Caco-2 (cell line): ENCODE measurements at regions of chr17 and their contacts with region 1.

Region 1: GRCh38 chr17:43760254-43760852 is 1.8 kb upstream of the SOST start:
- DNase-seq: peak; percentile 96
- H3K4me3 ChIP-seq: no peak overlapping the region
- H3K4me3 Mint-ChIP-seq: peak overlapping the region; percentile 46
- H3K27ac Mint-ChIP-seq: peak overlapping the region; percentile 44
- H3K4me1 ChIP-seq: no peaks in the 10 kb centered on the region
- H3K4me1 Mint-ChIP-seq: peaks cover 9% of the 10 kb centered on the region
- H3K27me3 ChIP-seq: no peaks in the 10 kb centered on the region
- H3K27me3 Mint-ChIP-seq: no peaks in the 10 kb centered on the region
- CTCF ChIP-seq: peak; percentile 99

Region 2: GRCh38 chr17:43694077-43694870 is 66.1 kb before region 1 on chr17:
- CTCF ChIA-PET with region 1: interaction called, 65 read pairs
- POLR2A ChIA-PET with region 1: no interaction called
- intact Hi-C with region 1: loop called (anchors 1 kb)
- DNase-seq: peak; percentile 85 to 88
- H3K4me3 ChIP-seq: no peak overlapping the region
- H3K4me3 Mint-ChIP-seq: peak overlapping the region; percentile 57
- H3K27ac Mint-ChIP-seq: no peak overlapping the region
- H3K4me1 ChIP-seq: no peaks in the 10 kb centered on the region
- H3K4me1 Mint-ChIP-seq: peaks cover 6% of the 10 kb centered on the region
- H3K27me3 ChIP-seq: no peaks in the 10 kb centered on the region
- H3K27me3 Mint-ChIP-seq: no peaks in the 10 kb centered on the region
- CTCF ChIP-seq: peak; percentile 87 to 96

Region 3: DNA sequence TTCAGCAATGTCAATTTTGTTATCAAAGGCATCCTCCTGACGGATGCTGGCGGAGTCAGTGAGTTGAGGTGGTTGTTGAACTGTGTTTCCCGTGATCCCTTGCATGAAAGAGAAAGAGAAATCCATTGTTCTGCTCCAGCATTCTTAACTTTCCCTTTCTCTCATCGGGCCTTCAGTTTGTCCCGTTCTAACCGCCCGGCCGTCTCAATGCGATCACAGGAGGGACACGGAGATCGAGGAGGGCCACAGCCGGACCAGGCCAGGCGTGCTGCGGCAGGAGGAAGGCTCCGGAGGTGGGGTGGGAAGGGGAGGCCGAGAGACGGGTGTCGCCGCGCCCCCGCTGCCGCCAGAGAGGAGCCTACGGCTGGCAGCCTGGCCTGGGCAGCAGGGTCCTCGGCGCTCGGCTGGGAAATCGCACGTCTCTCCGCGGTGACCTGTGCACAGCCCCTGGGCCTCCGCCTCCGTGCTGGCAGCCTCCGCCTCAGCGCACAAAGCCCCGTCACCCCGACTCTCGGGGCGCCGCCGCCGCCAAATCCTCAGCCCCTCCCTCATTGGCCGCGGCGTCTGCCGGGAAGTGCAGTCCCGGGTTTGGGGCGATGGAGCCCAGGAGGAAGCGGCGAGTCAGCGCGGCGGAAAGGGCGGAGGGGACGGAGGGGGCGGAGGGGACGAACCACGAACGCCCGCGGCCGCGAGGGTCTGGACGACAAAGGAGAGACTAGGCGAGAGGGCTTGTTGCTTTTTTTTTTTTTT is 39.9 kb before region 1 on chr17:
- CTCF ChIA-PET with region 1: no interaction called
- POLR2A ChIA-PET with region 1: interaction called, 6 read pairs
- intact Hi-C with region 1: loop called (anchors 1 kb)
- DNase-seq: peak; percentile 74 to 81
- H3K4me3 ChIP-seq: peak overlapping the region; percentile 75
- H3K4me3 Mint-ChIP-seq: peak overlapping the region; percentile 69
- H3K27ac Mint-ChIP-seq: peak overlapping the region; percentile 69
- H3K4me1 ChIP-seq: 0 out of 2 replicates have a peak, but pooled peaks cover 4% of the 10 kb centered on the region
- H3K4me1 Mint-ChIP-seq: peaks cover 28% of the 10 kb centered on the region
- H3K27me3 ChIP-seq: no peaks in the 10 kb centered on the region
- H3K27me3 Mint-ChIP-seq: no peaks in the 10 kb centered on the region
- CTCF ChIP-seq: no peak